ENCODE measurements at regions of chr17 and their contacts with region 1.

Region 1: GRCh38 chr17:79393358-79394202 is 217.3 kb downstream of the RBFOX3 start:
- DNase-seq: no peak
- H3K4me3 ChIP-seq: no peak overlapping the region
- CTCF ChIP-seq: peak; percentile 97

Region 2: GRCh38 chr17:79019632-79020584 is 373.7 kb before region 1 on chr17:
- CTCF ChIA-PET with region 1: interaction called, 143 read pairs
- POLR2A ChIA-PET with region 1: no interaction called
- DNase-seq: no peak
- H3K4me3 ChIP-seq: no peak overlapping the region
- CTCF ChIP-seq: peak; percentile 35

Region 3: DNA sequence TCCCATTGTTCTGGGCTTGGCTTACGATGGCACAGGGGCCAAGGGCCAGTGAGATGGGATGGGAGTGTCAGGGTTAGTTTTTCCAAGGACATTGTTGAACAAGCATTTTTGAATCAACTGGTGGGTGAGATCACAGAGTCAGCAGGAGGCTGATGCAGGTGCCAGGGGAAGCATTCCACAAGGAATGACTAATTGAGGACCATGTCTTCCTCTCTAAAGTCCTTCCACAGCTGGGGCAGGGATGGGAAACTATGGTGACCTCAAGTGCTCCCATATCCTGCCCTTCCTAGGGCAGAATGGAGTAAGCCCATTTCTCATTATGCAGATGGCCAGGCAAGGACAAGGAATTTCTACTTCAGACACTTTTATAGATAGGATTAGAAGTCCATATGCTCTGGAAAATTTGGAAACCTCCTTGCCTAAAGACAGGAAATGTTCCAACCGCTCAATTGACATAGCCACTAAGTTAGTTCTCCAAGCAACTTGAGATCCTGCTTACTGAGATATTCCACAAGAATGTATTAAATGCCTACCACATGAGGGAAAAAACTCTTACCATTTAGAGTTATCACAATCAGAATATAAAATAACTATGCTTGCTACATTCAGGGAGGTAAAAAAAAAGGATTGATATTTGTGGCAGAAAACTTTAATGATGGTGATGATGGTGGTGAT is 340.2 kb before region 1 on chr17:
- CTCF ChIA-PET with region 1: interaction called, 138 read pairs
- POLR2A ChIA-PET with region 1: no interaction called
- DNase-seq: no peak
- H3K4me3 ChIP-seq: no peak overlapping the region
- CTCF ChIP-seq: no peak

Region 4: GRCh38 chr17:79087428-79088143 is 306.0 kb before region 1 on chr17:
- CTCF ChIA-PET with region 1: interaction called, 473 read pairs
- POLR2A ChIA-PET with region 1: no interaction called
- DNase-seq: no peak
- H3K4me3 ChIP-seq: no peak overlapping the region
- CTCF ChIP-seq: peak; percentile 93

Region 5: DNA sequence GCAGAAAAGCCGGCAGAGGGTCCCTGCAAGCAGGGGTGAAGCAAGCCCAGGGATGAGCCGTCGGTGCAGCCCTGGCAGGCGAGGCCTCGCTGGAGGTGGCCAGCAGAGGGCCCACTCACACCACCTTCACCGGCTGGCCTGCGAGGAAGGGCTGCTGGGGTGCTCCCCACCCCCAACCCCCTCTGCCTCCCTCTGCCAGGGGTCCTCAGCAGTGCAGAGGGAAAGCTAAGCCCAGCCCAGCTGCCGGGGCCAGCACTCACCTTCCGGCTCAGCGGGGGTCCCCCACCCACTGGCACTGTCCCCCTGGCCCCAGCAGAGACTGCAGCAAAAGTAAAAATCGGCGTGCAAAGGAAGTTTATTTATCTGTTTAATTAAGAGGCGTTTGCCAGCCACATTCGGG is 205.5 kb before region 1 on chr17:
- CTCF ChIA-PET with region 1: interaction called, 96 read pairs
- POLR2A ChIA-PET with region 1: no interaction called
- DNase-seq: no peak
- H3K4me3 ChIP-seq: no peak overlapping the region
- CTCF ChIP-seq: peak; percentile 73

Region 6: DNA sequence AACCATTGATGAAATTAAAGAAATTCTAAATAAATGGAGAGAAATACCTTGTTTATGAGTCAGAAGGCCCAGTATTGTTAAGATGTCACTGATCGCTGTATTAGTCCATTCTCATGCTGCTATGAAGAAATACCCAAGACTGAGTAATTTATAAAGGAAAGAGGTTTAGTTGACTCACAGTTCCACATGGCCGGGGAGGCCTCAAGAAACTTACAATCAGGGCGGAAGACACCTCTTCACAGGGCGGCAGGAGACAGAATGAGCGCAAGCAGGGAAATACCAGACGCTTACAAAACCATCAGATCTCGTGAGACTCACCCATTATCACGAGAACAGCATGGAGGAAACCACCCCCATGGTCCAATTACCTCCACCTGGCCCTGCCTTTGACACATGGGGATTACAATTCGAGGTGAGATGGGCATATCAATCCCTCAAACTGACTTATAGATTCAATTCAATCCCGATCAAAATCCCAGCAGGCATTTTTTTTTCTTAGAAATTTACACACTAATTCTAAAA is 161.8 kb before region 1 on chr17:
- CTCF ChIA-PET with region 1: no interaction called
- POLR2A ChIA-PET with region 1: no interaction called
- DNase-seq: no peak
- H3K4me3 ChIP-seq: no peak overlapping the region
- CTCF ChIP-seq: no peak

Region 7: DNA sequence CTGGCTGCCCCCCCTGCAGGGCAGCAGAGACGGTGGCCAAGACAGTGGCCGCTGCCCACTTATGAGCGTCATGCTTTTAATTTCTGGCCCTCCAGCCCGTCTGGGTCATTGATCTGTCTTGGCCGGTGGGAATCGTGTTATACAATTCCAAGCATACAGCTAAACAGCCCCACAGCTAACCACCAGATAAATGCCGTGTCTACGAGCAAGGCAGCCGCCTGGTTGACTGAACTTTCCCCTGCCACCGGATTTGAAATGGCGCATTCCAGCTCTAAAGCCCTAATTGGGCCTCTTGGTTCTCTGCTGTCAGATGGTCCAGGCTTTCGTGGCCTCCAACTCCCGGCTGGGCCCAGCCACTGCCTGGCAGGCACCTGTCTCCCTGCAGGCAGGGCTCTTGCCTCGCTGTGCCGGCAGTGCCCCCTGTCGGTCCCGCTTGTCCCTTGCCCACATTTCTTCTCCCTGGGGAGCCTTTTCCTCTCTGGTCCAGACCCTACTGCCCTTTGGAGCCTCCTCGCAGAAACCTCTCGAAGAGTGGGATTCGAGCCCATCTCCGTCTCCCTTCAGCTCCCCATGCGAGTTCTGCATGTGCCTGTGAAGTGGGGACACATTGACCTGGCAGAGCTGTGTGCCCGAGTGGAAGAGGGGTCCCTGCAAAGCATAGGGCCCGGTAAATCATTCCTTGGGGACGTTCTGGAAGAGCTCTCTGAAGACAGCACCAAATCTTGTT is 219.1 kb after region 1 on chr17:
- CTCF ChIA-PET with region 1: no interaction called
- POLR2A ChIA-PET with region 1: no interaction called
- DNase-seq: no peak
- H3K4me3 ChIP-seq: no peak overlapping the region
- CTCF ChIP-seq: peak; percentile 43

Region 8: DNA sequence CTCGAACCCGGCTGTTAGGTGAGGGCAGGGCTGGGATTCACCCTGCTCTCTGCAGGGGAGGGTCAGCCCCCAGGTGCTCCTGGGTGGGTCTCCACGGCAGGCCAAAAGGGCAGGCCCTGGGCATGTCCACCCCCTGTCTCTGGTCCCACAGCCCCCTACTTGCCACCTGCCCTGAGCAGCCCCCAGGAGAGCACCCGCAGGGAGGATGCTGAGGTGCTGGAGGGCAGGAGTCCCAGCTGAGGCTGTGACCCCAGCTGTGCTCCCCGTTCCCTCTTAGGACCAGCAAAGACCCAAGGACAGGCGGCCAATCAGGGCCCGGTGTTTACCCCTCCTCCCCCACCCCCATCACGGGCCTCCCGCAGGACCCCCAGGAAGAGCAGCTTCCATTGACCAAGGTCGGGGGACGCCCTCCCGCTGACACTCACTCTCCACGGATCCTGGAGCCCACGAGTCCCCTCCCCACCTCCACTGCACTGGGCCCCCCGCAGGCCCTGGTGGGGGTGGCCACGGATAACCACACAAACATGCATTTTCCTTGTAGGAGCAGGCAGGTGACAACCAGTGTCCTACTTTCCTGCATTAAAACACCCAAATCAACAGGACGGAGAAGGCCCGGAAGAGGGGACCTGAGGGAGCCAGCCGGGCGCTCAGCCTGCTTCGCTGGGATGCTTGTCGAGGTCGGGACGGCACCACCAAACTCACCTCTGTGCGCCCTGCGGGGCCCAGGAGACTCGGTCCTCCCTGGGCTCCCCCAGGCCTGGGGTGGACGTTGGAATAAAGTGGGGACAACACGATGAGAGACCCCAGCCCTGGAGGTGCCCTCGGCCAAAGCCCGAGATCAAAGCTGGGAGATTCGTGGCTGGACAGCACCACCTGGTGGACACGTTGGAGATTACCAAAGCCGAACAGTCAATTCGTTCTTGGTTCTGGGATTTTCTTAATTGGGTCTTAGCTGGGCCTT is 314.6 kb after region 1 on chr17:
- CTCF ChIA-PET with region 1: interaction called, 13 read pairs
- POLR2A ChIA-PET with region 1: no interaction called
- DNase-seq: no peak
- H3K4me3 ChIP-seq: peak overlapping the region; percentile 21
- CTCF ChIP-seq: peak; percentile 74

Measured in AG04449 (cell line).